ENCODE measurements at regions of chr1 and their contacts with region 1.

Region 1: DNA sequence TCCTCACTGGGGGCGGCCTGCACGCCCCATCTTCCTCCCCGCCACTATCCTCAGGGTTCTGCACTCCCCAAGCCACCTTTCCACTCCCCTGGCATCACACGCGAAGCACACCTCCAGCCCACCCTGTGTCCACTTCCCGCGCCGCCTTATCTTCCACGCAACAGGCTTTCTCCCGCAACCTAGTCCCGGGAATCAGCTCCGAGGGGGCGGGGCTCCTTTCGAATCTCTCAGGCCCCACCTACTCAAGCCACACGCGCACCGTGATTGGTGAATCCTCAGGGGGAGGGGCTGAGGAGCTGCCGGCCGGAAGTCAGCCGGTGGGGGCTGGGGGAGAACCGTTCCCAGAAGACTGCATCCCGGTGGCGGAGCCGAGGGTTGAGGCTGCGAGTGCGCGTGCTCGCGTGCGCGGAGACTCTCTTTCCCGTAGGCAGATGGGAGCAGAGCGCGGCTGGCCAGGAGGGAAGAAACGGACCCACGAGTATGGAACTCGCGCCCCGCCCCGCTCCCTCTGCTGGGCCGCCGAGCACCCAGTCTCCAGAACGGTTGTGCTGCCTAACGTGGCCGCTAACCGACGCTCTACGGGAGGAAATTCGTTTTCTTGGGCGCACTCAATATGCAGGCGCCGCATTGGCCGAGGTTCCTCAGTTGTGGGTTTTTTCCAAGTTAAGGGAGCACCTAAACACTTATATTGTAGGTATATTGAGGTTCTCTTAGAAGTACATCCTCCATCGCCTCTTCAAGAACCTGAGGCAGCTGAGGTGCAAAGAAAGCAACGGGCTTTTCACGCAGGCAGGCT is at the start of gene PSRC1:
- DNase-seq: peak; percentile 89
- H3K4me3 Mint-ChIP-seq: peak within 1 kb of the TSS; percentile 97
- H3K27ac Mint-ChIP-seq: peak within 1 kb of the TSS; percentile 81
- H3K4me1 Mint-ChIP-seq: peaks cover 35% of the 10 kb centered on the region
- H3K27me3 Mint-ChIP-seq: peaks cover 3% of the 10 kb centered on the region
- total RNA-seq, gene PSRC1: 3.6 and 5.5 TPM in 2 replicates

Region 2: GRCh38 chr1:108624055-108624454 is 659.1 kb before region 1 on chr1:
- intact Hi-C with region 1: no loop called
- DNase-seq: no peak
- H3K4me3 Mint-ChIP-seq: no peak overlapping the region
- H3K27ac Mint-ChIP-seq: no peak overlapping the region
- H3K4me1 Mint-ChIP-seq: no peaks in the 10 kb centered on the region
- H3K27me3 Mint-ChIP-seq: no peaks in the 10 kb centered on the region

Region 3: GRCh38 chr1:108955881-108956280 is 327.3 kb before region 1 on chr1:
- intact Hi-C with region 1: no loop called
- DNase-seq: no peak
- H3K4me3 Mint-ChIP-seq: no peak overlapping the region
- H3K27ac Mint-ChIP-seq: no peak overlapping the region
- H3K4me1 Mint-ChIP-seq: peaks cover 49% of the 10 kb centered on the region
- H3K27me3 Mint-ChIP-seq: peaks cover 6% of the 10 kb centered on the region

Region 4: GRCh38 chr1:109201123-109201703 is 81.9 kb before region 1 on chr1:
- intact Hi-C with region 1: loop called (anchors 1 kb)
- DNase-seq: no peak
- H3K4me3 Mint-ChIP-seq: no peak overlapping the region
- H3K27ac Mint-ChIP-seq: peak overlapping the region; percentile 26
- H3K4me1 Mint-ChIP-seq: peaks cover 38% of the 10 kb centered on the region
- H3K27me3 Mint-ChIP-seq: peaks cover 2% of the 10 kb centered on the region

Region 5: GRCh38 chr1:109248797-109249642 is 34.1 kb before region 1 on chr1 and contains the start of gene CELSR2:
- intact Hi-C with region 1: loop called (anchors 1 kb)
- DNase-seq: peak; percentile 67
- H3K4me3 Mint-ChIP-seq: peak within 1 kb of the TSS; percentile 72
- H3K27ac Mint-ChIP-seq: no peak within 1 kb of the TSS
- H3K4me1 Mint-ChIP-seq: peaks cover 6% of the 10 kb centered on the region
- H3K27me3 Mint-ChIP-seq: peaks cover 14% of the 10 kb centered on the region
- total RNA-seq, gene CELSR2: 4.1 and 4.9 TPM in 2 replicates

Region 6: GRCh38 chr1:109263597-109264398 is 19.4 kb before region 1 on chr1:
- intact Hi-C with region 1: loop called (anchors 2 kb)
- DNase-seq: peak; percentile 71
- H3K4me3 Mint-ChIP-seq: no peak overlapping the region
- H3K27ac Mint-ChIP-seq: peak overlapping the region; percentile 49
- H3K4me1 Mint-ChIP-seq: no peaks in the 10 kb centered on the region
- H3K27me3 Mint-ChIP-seq: no peaks in the 10 kb centered on the region

Region 7: DNA sequence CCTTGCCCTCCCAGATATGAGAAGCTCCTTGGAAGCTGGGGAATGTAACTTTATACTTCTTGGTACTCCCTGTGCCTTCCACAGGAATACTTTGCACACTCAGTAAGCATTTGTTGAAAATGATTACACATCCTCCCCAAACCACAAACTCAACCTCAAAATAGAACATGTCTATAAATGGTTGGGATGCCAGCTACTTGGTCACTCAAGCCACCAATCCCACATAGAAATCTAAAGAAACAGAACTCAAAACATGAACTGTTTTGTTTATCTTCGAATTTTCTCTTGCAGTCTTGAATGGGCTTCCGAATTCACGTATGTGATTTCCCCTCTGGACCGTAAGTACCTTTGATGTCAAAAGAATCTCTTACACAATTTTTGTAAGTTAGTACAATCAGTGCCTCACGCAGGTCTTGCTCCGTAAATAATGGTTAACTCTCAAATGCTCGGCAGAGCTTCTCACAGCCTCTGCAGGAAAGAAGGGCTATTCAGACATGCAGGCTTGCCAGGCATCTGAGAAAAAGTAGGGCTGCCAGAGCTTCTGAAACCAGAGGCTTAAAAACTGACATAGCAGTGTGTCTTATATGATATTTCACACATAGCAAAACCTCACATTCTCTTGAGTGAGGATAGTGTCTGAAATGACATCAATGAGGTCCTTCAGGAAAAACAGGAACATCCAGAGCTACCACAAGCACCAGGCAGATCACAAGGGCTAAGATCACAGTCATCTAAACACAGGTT is 87.7 kb after region 1 on chr1:
- intact Hi-C with region 1: loop called (anchors 2 kb)
- DNase-seq: peak; percentile 1
- H3K4me3 Mint-ChIP-seq: peak overlapping the region; percentile 13
- H3K27ac Mint-ChIP-seq: peak overlapping the region; percentile 79
- H3K4me1 Mint-ChIP-seq: peaks cover 50% of the 10 kb centered on the region
- H3K27me3 Mint-ChIP-seq: peaks cover 12% of the 10 kb centered on the region

Region 8: DNA sequence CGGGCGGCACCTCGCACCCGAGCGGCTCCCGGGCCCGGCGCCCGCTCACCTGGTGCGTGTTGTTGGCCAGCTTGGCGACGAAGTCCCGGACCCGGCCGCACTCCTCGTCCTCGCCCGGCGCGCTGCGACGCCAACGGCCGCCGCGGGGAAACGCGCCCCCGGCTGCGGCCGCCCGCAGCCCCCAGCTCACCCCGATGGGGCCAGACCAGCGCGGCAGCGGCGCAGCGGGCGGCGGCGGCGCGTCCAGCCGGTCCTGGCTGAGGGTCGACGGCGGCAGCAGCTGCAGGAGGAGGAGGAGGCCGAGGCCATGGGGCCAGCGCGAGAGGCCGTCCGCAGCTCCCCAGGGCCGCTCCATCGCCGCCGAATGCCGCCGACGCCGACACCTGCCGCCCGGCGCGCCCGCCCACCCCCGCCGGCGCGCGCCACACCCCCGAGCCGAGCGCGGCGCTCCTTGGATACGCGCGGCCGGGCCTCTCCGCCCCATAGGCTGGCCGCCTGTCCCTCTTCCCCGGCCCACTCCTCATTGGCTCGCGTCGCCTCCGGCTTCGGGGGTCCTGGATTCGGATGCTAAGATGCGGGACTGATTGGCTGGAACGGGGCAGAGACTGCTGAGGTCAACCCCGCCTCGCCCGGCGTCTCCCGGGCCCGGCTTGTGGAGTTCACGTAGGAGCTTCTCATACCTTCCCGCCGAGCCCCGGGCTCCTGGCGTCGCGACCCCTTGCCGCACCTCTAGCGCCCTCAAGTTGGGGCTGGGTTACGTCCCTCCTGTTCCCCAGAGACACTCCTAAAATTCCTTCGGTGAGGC is 114.6 kb after region 1 on chr1 and contains the start of gene SORT1:
- intact Hi-C with region 1: loop called (anchors 1 kb)
- DNase-seq: peak; percentile 45
- H3K4me3 Mint-ChIP-seq: peak within 1 kb of the TSS; percentile 86
- H3K27ac Mint-ChIP-seq: peak within 1 kb of the TSS; percentile 38
- H3K4me1 Mint-ChIP-seq: peaks cover 25% of the 10 kb centered on the region
- H3K27me3 Mint-ChIP-seq: peaks cover 42% of the 10 kb centered on the region
- total RNA-seq, gene SORT1: 1.4 and 1.5 TPM in 2 replicates

Region 9: GRCh38 chr1:109483672-109484518 is 200.7 kb after region 1 on chr1 and contains the start of gene ATXN7L2:
- intact Hi-C with region 1: loop called (anchors 1 kb)
- DNase-seq: peak; percentile 87
- H3K4me3 Mint-ChIP-seq: peak within 1 kb of the TSS; percentile 95
- H3K27ac Mint-ChIP-seq: peak within 1 kb of the TSS; percentile 96
- H3K4me1 Mint-ChIP-seq: peaks cover 35% of the 10 kb centered on the region
- H3K27me3 Mint-ChIP-seq: peaks cover 13% of the 10 kb centered on the region
- total RNA-seq, gene ATXN7L2: 17.4 and 18.0 TPM in 2 replicates

Measured in activated T-helper 1 cell treated with anti-CD3 and anti-CD28 coated beads, Interleukin-12 subunit alpha, Interleukin-12 subunit beta, Interleukin-2, Interleukin-4 antibody, amounts not matched to agents 30 ng/mL and 10 ng/mL and 1 ng/mL, durations not matched to agents 14 hours and 24 hours and 36 hours (primary cell).